ENCODE measurements at regions of chr6 and their contacts with region 1.

Region 1: GRCh38 chr6:1624851-1625781 is 15.4 kb downstream of the FOXC1 start:
- DNase-seq: peak in 1 of 2 donors; percentile 39
- ATAC-seq: peak; percentile 75 to 83 (median 80)
- H3K4me3 ChIP-seq: peak overlapping the region; percentile 47 to 81 (median 62)
- H3K27ac ChIP-seq: peak overlapping the region in 9 of 10 donors; percentile 46 to 88 (median 78)
- H3K4me1 ChIP-seq: peaks cover 0 to 49% (median 22%) of the 10 kb centered on the region in 9 donors
- H3K27me3 ChIP-seq: peaks cover 0 to 90% (median 43%) of the 10 kb centered on the region in 7 donors
- CTCF ChIP-seq: no peak

Region 2: DNA sequence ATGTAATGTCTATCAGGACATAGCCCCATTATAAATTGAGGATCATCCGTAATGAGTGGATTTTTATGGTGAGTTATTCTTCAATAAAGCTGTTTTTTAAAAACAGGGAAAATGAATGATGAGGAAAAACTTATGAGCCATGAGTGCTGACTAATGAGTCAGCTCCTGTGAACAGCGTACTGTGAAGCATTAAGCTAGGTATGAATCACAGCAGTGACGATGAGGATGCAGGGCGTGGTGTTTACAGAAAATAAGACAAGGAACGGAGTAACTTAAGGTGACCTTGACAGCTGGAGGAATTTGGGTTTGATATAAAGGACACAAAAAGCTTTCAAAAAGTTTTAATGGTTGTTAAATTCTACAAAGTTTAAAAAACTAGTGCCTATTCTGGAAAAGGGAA is 139.4 kb before region 1 on chr6:
- intact Hi-C with region 1: no loop called
- DNase-seq: no peak
- ATAC-seq: no peak
- H3K4me3 ChIP-seq: no peak overlapping the region
- H3K27ac ChIP-seq: no peak overlapping the region
- H3K4me1 ChIP-seq: no peaks in the 10 kb centered on the region
- H3K27me3 ChIP-seq: peaks cover 0 to 9% (median 0%) of the 10 kb centered on the region in 7 donors
- CTCF ChIP-seq: no peak

Region 3: GRCh38 chr6:1679687-1680065 is 54.6 kb after region 1 on chr6:
- intact Hi-C with region 1: loop called in 1 of 10 experiments (anchors 5 kb)
- DNase-seq: no peak
- ATAC-seq: peak in 1 of 8 donors; percentile 4
- H3K4me3 ChIP-seq: no peak overlapping the region
- H3K27ac ChIP-seq: peak overlapping the region in 6 of 10 donors; percentile 42 to 77 (median 56)
- H3K4me1 ChIP-seq: peaks cover 5 to 28% (median 20%) of the 10 kb centered on the region in 9 donors
- H3K27me3 ChIP-seq: no peaks in the 10 kb centered on the region
- CTCF ChIP-seq: no peak

Region 4: DNA sequence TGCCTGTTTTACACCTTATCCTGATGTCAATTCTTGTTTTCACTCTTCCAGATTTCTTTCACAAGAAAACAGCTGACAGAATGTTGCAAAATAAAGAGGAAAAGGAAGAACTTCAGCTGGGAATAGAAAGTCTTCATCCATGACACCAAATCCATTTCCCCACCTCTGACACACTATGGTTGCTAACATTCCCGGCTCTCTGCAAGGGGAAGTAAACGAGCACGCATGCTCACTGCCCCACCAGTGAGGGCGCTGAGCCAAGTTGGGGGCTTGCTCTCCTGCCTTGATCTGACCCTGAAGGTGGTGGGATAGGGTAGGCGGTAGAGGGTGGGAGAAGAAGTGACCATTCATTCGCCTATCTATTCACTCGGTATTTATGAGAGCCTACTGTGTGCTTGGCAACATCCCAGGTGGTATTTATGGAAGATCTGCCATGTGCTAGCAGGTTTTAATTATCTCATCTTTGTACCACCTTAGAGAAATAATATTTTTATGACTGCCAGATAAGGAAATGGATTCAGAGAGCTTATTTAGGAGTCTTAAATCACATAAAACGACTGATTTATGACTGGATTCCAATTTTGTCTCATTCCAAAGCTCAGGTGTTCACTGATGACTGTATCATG is 190.8 kb after region 1 on chr6:
- intact Hi-C with region 1: no loop called
- DNase-seq: no peak
- ATAC-seq: no peak
- H3K4me3 ChIP-seq: no peak overlapping the region
- H3K27ac ChIP-seq: no peak overlapping the region
- H3K4me1 ChIP-seq: peaks cover 0 to 15% (median 3%) of the 10 kb centered on the region in 9 donors
- H3K27me3 ChIP-seq: no peaks in the 10 kb centered on the region
- CTCF ChIP-seq: no peak

Region 5: GRCh38 chr6:2103644-2104523 is 478.8 kb after region 1 on chr6:
- intact Hi-C with region 1: loop called in 1 of 10 experiments (anchors 5 kb)
- DNase-seq: no peak
- ATAC-seq: peak in 7 of 8 donors; percentile 75 to 83 (median 79)
- H3K4me3 ChIP-seq: peak overlapping the region in 4 of 10 donors; percentile 5 to 26 (median 14)
- H3K27ac ChIP-seq: peak overlapping the region in 2 of 10 donors; percentile 17 to 24
- H3K4me1 ChIP-seq: peaks cover 0 to 10% (median 0%) of the 10 kb centered on the region in 9 donors
- H3K27me3 ChIP-seq: no peaks in the 10 kb centered on the region
- CTCF ChIP-seq: peak in 8 of 9 donors; percentile 30 to 77 (median 65)